Endothelial cell of umbilical vein (primary cell): ENCODE measurements at regions of chr6 and their contacts with region 1.

Region 1: DNA sequence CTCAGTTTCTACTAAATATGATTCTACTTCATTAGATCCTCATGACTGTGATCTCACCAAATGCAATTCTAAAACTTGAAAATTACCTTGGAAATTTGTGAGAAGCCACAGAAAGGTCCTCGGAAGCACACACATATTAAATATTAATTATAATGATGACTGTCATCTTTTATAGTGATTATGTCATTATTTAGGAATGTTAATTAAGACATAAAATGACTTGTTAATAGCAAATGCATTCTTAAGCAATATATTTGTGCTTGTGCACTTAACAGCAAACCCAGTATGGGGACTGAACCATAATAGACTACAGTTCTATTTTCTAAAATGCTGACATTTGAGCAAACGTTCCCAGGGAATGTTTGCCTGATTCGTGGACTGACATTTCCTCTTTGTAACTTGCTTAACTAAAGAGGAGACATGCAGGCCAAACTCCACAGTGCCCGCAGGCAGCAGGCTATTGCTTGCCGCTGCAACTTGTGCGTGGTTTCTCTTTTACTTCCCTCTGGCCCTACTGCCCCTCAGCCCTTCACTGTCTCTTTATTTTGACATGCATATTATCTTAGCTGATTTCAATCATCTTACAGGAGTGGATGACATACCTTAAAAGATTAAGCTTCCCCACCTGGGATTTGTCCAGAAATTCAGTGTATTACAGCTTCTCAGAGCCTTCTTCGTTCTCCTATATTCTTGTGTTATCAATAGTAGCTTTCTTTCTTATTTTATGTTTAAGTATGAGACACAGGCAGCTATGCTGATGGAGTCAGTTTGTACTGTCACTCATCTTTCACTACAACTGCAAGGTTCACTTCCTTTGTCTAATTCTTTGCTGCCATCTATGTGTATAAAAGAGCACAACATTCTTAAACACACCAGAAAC is 141.5 kb downstream of the GMDS start:
- DNase-seq: peak; percentile 84
- H3K4me3 ChIP-seq: peak overlapping the region in 2 of 3 experiments; percentile 1 to 47
- H3K27ac ChIP-seq: peak overlapping the region; percentile 46
- H3K4me1 ChIP-seq: peaks cover 21% of the 10 kb centered on the region
- H3K27me3 ChIP-seq: no peaks in the 10 kb centered on the region
- CTCF ChIP-seq: peak; percentile 37 to 40
- POLR2A ChIP-seq: no peak

Region 2: GRCh38 chr6:1596088-1596852 is 507.6 kb before region 1 on chr6:
- CTCF ChIA-PET with region 1: interaction called, 18 read pairs
- POLR2A ChIA-PET with region 1: no interaction called
- dilution Hi-C with region 1: loop called (anchors 25 kb)
- intact Hi-C with region 1: no loop called
- DNase-seq: peak; percentile 58
- H3K4me3 ChIP-seq: no peak overlapping the region
- H3K27ac ChIP-seq: no peak overlapping the region
- H3K4me1 ChIP-seq: no peaks in the 10 kb centered on the region
- H3K27me3 ChIP-seq: peaks cover 1 to 2% of the 10 kb centered on the region in 2 experiments
- CTCF ChIP-seq: peak; percentile 81 to 93
- POLR2A ChIP-seq: no peak

Region 3: DNA sequence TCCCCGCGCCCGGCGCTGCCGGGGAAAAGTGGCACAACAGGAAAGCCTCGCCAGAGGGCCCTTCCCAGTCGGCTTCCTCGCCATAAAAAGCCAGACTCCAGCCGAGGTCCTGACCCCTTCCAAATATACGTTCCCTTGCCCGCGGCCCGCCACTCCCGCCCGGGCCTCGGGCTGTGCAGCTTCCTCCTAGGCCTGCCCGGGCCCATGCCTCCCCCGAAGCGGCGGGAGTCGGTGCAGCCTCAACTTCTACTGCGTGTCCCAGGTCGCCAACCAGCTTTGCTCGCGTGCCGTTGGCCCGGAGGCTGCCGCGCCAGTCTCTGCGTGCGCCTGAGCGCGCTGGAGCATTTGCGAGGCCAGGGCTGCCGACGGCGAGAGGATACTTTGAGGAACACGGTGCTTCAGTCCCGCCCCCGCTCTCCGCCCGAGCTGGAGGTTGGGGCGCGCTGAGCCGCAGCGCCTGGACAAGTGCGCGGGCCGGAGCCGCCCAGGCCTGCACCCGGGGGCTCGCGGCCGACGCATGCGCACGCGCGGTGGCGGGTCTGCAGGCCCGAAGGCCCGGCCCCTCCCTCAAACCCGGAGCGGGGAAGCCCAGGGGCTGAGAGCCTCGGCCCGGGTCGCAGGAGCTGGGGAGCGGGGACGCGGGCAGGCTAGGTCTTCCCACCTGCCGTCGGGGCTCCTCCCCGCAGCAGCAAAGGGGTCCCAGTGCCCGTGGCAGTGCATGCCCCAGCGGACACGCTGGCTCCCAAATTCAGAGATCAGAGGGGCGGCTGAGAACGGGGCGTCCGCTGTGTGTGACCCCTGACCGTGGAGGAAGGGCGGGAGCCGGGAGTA is 484.0 kb before region 1 on chr6:
- CTCF ChIA-PET with region 1: interaction called, 25 read pairs
- POLR2A ChIA-PET with region 1: interaction called, 3 read pairs
- dilution Hi-C with region 1: loop called (anchors 25 kb)
- intact Hi-C with region 1: no loop called
- DNase-seq: peak; percentile 61
- H3K4me3 ChIP-seq: peak overlapping the region in 1 of 3 experiments; percentile 17
- H3K27ac ChIP-seq: no peak overlapping the region
- H3K4me1 ChIP-seq: peaks cover 45% of the 10 kb centered on the region
- H3K27me3 ChIP-seq: no peaks in the 10 kb centered on the region
- CTCF ChIP-seq: no peak
- POLR2A ChIP-seq: no peak

Region 4: GRCh38 chr6:1787894-1788293 is 316.0 kb before region 1 on chr6:
- CTCF ChIA-PET with region 1: interaction called, 3 read pairs
- POLR2A ChIA-PET with region 1: no interaction called
- dilution Hi-C with region 1: loop called (anchors 25 kb)
- intact Hi-C with region 1: loop called (anchors 1 kb)
- DNase-seq: peak; percentile 92
- H3K4me3 ChIP-seq: no peak overlapping the region
- H3K27ac ChIP-seq: peak overlapping the region; percentile 84
- H3K4me1 ChIP-seq: peaks cover 45% of the 10 kb centered on the region
- H3K27me3 ChIP-seq: no peaks in the 10 kb centered on the region
- CTCF ChIP-seq: no peak
- POLR2A ChIP-seq: no peak

Region 5: DNA sequence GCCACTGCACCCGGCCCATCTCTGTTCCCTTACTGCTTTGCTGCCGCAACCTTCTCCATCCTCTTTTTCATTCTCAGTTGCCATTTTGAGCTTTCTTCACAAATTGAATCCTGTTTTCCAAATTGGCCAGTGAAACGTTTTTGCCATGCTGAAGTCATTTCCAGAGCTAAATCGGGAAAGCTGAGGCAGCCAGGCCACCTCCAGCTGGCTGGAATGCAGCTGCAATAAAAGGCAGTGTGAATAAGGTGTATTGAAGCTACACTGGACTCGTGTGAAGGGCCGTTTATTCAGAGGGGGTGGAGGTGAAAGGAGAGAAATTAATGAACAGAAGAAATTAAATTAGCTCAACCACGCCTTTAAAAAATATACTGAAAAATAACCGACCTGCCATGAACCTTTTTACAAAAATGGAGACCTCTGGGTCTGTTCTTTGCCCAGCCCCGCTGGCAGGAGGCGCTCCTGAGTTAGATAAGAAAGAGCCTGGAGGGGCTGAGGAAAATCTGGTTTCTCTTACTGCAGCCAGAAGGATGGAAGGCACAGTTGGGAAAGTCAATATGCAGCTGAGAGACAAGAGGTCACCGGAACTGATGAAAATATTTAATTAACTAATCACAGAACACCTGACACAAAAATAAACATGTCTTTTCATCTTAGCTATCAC is 210.3 kb before region 1 on chr6:
- CTCF ChIA-PET with region 1: interaction called, 13 read pairs
- POLR2A ChIA-PET with region 1: no interaction called
- dilution Hi-C with region 1: no loop called
- intact Hi-C with region 1: loop called (anchors 5 kb)
- DNase-seq: no peak
- H3K4me3 ChIP-seq: no peak overlapping the region
- H3K27ac ChIP-seq: no peak overlapping the region
- H3K4me1 ChIP-seq: peaks cover 2% of the 10 kb centered on the region
- H3K27me3 ChIP-seq: no peaks in the 10 kb centered on the region
- CTCF ChIP-seq: no peak
- POLR2A ChIP-seq: no peak

Region 6: DNA sequence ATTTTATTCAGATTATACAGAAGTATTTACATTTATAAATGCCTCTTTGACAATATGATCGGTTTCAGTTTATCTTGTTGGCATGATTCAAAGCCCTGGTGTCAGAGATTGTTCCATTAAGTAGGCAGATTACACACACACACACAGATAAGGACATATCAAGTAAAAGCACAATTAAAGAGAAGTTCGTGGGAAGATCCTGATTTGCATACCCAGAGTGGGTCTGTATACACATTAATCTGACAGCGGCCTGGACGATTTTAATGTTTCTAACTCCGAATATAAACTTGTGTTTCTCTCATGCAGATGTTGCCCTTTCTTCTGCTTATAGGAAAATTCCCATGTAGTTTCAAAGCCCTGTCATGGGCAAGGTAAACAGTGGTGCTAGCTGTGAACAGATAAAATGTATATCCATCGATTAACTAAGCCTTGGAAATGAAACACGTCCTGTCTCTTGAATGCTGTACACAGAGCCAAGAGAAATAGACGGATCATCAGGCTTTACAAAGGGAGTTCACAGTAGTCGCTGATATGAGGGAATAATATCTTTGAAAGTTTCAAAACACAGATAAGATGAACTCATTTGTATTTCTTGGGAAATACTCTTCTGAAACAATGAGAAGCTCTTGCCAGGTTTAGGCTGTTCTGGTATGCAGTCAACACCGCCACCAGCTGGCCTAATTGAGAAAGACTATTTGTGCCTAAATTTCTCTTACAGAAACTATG is 249.7 kb after region 1 on chr6:
- CTCF ChIA-PET with region 1: interaction called, 41 read pairs
- POLR2A ChIA-PET with region 1: no interaction called
- dilution Hi-C with region 1: no loop called
- intact Hi-C with region 1: loop called (anchors 1 kb)
- DNase-seq: peak; percentile 92
- H3K4me3 ChIP-seq: peak overlapping the region in 1 of 3 experiments; percentile 6
- H3K27ac ChIP-seq: no peak overlapping the region
- H3K4me1 ChIP-seq: peaks cover 6% of the 10 kb centered on the region
- H3K27me3 ChIP-seq: no peaks in the 10 kb centered on the region
- CTCF ChIP-seq: peak; percentile 64 to 66
- POLR2A ChIP-seq: no peak